ENCODE measurements at regions of chr15 and their contacts with region 1.

Region 1: DNA sequence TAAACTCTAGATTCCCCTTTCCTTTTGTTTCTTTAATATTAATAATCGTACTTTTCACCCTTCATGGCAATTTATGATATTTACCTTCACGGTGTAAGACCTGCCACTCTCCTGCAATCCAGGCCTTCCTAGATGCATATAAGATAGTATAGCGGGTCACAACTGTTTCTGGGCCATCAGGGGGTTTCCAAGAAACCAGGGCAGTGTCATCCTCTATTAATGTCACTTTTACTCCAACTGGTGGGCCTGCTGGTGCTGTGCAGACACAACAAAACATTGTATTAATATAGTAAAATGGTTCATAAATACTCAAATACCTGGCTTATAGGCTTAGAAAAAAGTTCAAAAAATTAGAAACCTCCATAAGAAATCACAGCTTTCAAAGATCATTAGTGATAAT is 48.9 kb upstream of the PYGO1 start:
- DNase-seq: no peak
- H3K4me3 ChIP-seq: no peak overlapping the region
- CTCF ChIP-seq: no peak

Region 2: GRCh38 chr15:55518641-55519040 is 118.4 kb before region 1 on chr15:
- CTCF ChIA-PET with region 1: interaction called, 69 read pairs
- POLR2A ChIA-PET with region 1: no interaction called
- DNase-seq: no peak
- H3K4me3 ChIP-seq: no peak overlapping the region
- CTCF ChIP-seq: no peak

Region 3: DNA sequence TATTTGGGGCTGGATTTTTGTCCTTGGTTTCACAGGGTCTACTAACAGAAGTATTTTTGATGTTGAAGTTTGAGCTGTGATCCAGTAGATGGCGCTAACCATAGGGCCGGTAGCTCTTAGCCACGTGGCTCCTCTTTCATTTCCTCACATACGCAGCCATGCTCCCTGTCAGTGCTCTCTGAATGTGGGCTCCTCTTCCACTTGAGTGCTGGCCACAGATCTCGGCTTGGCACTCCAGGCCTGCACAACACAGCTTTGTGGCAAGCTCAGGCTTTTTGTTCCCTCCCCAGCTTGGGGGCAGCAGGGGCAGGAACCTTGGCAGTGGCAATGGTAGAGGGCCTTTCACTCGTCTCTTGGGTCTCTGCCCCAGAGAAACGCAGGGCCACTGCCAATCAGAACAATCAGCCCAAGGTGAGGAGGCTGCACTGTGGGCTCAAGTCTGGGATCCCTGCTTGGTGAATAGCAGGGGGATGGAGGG is 110.5 kb before region 1 on chr15:
- CTCF ChIA-PET with region 1: interaction called, 69 read pairs
- POLR2A ChIA-PET with region 1: no interaction called
- DNase-seq: no peak
- H3K4me3 ChIP-seq: no peak overlapping the region
- CTCF ChIP-seq: peak; percentile 68

Measured in AG04449 (cell line).